HepG2 (cell line): ENCODE measurements at regions of chr2 and their contacts with region 1.

Region 1: GRCh38 chr2:120470041-120470965 is 124.4 kb downstream of the INHBB start:
- DNase-seq: peak; percentile 95
- ATAC-seq: peak; percentile 70
- H3K4me3 ChIP-seq: peak overlapping the region in 2 of 3 experiments; percentile 1 to 27; a peak in 2 of 6 replicates
- H3K27ac ChIP-seq: peak overlapping the region; percentile 36
- H3K4me1 ChIP-seq: peaks cover 87% of the 10 kb centered on the region
- H3K27me3 ChIP-seq: no peaks in the 10 kb centered on the region
- CTCF ChIP-seq: peak; percentile 26; the same call in 1 of the 2 replicates
- EP300 ChIP-seq: peak in 1 of 2 experiments; percentile 85; a peak in 3 of 4 replicates
- POLR2A ChIP-seq: peak in 1 of 2 experiments; percentile 60; a peak in 2 of 4 replicates
- RAD21 ChIP-seq: peak; percentile 34; the same call in 1 of the 2 replicates

Region 2: GRCh38 chr2:119223521-119224390 is 1246.5 kb before region 1 on chr2 and contains the start of gene STEAP3:
- CTCF ChIA-PET with region 1: no interaction called
- POLR2A ChIA-PET with region 1: no interaction called
- in situ Hi-C with region 1: no loop called
- intact Hi-C with region 1: no loop called
- DNase-seq: peak; percentile 74
- ATAC-seq: peak; percentile 93
- H3K4me3 ChIP-seq: peak within 1 kb of the TSS; percentile 71 to 87 (median 78)
- H3K27ac ChIP-seq: no peak within 1 kb of the TSS
- H3K4me1 ChIP-seq: peaks cover 54% of the 10 kb centered on the region
- H3K27me3 ChIP-seq: 0 out of 5 replicates have a peak, but pooled peaks cover 0 to 4% of the 10 kb centered on the region in 2 experiments
- CTCF ChIP-seq: 0 out of 2 replicates have a peak, but pooled peaks have one; percentile 10
- EP300 ChIP-seq: peak in 1 of 2 experiments; percentile 8; a peak in 1 of 4 replicates
- POLR2A ChIP-seq: peak; percentile 79 to 83
- RAD21 ChIP-seq: peak; percentile 26
- total RNA-seq, gene STEAP3: 12.8 and 21.1 TPM in 2 replicates

Region 3: GRCh38 chr2:120343433-120344105 is 126.7 kb before region 1 on chr2:
- CTCF ChIA-PET with region 1: no interaction called
- POLR2A ChIA-PET with region 1: interaction called, 17 read pairs
- in situ Hi-C with region 1: no loop called
- intact Hi-C with region 1: no loop called
- DNase-seq: peak; percentile 68
- ATAC-seq: peak; percentile 89
- H3K4me3 ChIP-seq: peak overlapping the region in 1 of 3 experiments; percentile 36; a peak in 1 of 6 replicates
- H3K27ac ChIP-seq: no peak overlapping the region
- H3K4me1 ChIP-seq: peaks cover 34% of the 10 kb centered on the region
- H3K27me3 ChIP-seq: peaks cover 25 to 88% of the 10 kb centered on the region in 2 experiments; a peak in 4 of 5 replicates
- CTCF ChIP-seq: peak; percentile 97
- EP300 ChIP-seq: no peak
- POLR2A ChIP-seq: no peak
- RAD21 ChIP-seq: peak; percentile 100

Region 4: GRCh38 chr2:120373424-120373823 is 96.9 kb before region 1 on chr2:
- CTCF ChIA-PET with region 1: no interaction called
- POLR2A ChIA-PET with region 1: no interaction called
- in situ Hi-C with region 1: no loop called
- intact Hi-C with region 1: no loop called
- DNase-seq: no peak
- ATAC-seq: no peak
- H3K4me3 ChIP-seq: no peak overlapping the region
- H3K27ac ChIP-seq: no peak overlapping the region
- H3K4me1 ChIP-seq: peaks cover 8% of the 10 kb centered on the region
- H3K27me3 ChIP-seq: peaks cover 10 to 70% of the 10 kb centered on the region in 2 experiments; a peak in 4 of 5 replicates
- CTCF ChIP-seq: no peak
- EP300 ChIP-seq: no peak
- POLR2A ChIP-seq: no peak
- RAD21 ChIP-seq: no peak

Region 5: DNA sequence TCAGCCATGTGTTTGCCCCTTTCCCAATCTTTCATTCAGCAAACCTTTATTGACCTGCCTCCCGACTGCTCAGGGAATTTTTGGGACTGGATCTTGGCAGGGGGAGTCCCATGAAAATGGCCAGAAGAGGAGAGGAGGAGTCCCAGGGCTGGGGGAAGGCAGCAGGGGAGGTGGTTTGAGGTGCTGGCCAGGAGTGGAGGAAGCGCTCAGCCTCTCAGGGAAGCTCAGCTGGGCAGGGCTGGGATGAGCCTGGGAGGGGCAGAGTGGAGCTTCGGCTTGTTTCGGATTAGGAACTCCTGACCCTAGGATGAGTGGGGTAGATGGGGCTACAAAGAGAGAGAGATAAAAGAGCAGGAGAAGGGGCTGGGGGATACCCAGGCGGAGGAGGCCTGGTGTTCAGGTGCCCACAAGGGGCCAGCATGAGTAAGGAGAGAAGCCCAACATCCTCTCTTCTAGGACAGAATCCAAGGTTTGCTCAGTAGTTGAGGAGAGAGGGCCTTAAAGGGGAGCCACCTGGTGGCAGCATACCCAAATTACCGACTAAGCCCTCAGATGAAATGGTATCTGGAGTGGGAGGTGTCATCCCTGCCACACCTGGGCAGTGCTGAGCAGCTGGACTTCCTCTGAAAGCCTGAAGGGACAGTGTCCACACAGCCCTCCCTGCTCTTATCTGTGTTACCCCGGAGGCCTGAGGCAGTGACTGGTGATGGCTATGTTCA is 33.3 kb before region 1 on chr2:
- CTCF ChIA-PET with region 1: no interaction called
- POLR2A ChIA-PET with region 1: interaction called, 22 read pairs
- in situ Hi-C with region 1: no loop called
- intact Hi-C with region 1: loop called (anchors 1 kb)
- DNase-seq: peak; percentile 80
- ATAC-seq: peak; percentile 80
- H3K4me3 ChIP-seq: no peak overlapping the region
- H3K27ac ChIP-seq: no peak overlapping the region
- H3K4me1 ChIP-seq: peaks cover 27% of the 10 kb centered on the region
- H3K27me3 ChIP-seq: peaks cover 23 to 80% of the 10 kb centered on the region in 2 experiments
- CTCF ChIP-seq: peak; percentile 82
- EP300 ChIP-seq: no peak
- POLR2A ChIP-seq: no peak
- RAD21 ChIP-seq: peak; percentile 95

Region 6: GRCh38 chr2:120481446-120482194 is 11.3 kb after region 1 on chr2:
- CTCF ChIA-PET with region 1: no interaction called
- POLR2A ChIA-PET with region 1: interaction called, 159 read pairs
- in situ Hi-C with region 1: no loop called
- intact Hi-C with region 1: loop called (anchors 1 kb)
- DNase-seq: peak; percentile 59
- ATAC-seq: peak; percentile 62
- H3K4me3 ChIP-seq: peak overlapping the region in 1 of 3 experiments; percentile 38; a peak in 1 of 6 replicates
- H3K27ac ChIP-seq: no peak overlapping the region
- H3K4me1 ChIP-seq: peaks cover 49% of the 10 kb centered on the region
- H3K27me3 ChIP-seq: no peaks in the 10 kb centered on the region
- CTCF ChIP-seq: peak; percentile 35; the same call in 1 of the 2 replicates
- EP300 ChIP-seq: peak in 1 of 2 experiments; percentile 58; a peak in 1 of 4 replicates
- POLR2A ChIP-seq: no peak
- RAD21 ChIP-seq: no peak

Region 7: DNA sequence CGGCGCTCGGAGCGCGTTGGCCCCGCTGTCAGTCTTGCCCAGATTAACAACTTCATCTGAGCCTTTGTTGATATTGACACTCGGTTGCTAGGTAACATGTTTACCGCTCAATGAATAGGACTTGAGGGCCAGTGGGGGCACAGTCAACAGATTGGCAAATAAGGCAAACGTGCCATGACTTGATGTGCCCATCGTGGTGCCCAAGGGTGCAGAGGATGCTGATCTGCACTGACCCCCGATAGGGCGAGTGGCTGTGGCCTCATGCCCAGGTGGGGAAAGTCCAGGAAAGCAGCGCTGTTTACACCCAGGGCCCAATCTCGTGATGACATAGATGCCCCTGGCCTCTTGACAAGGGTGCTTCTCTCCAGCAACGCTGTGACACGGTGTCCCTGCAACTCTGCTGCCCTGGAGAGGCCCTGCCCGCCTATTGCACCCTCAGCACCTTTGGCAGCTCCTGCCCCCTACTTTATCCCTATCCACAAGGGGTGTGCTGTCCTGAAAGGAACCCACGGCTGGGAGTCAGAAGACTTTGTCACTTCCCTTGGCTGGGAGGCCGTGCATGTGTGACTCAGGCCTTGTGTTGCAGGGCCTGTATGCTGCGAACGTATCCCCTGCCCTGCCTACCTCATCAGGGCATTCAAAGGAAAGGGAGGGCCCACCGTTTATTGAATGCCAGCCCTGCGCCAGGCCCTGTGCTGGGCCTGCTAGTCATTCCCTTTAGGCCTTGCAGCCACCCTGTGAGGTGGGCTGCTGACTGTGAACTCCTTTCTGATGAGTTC is 33.7 kb after region 1 on chr2:
- CTCF ChIA-PET with region 1: no interaction called
- POLR2A ChIA-PET with region 1: interaction called, 15 read pairs
- in situ Hi-C with region 1: no loop called
- intact Hi-C with region 1: no loop called
- DNase-seq: peak; percentile 59
- ATAC-seq: peak; percentile 72
- H3K4me3 ChIP-seq: 0 out of 6 replicates have a peak overlapping the region, but pooled peaks of 1 of the 3 experiments have one; percentile 10
- H3K27ac ChIP-seq: no peak overlapping the region
- H3K4me1 ChIP-seq: peaks cover 46% of the 10 kb centered on the region
- H3K27me3 ChIP-seq: peaks cover 2 to 70% of the 10 kb centered on the region in 2 experiments; a peak in 4 of 5 replicates
- CTCF ChIP-seq: peak; percentile 42
- EP300 ChIP-seq: no peak
- POLR2A ChIP-seq: no peak
- RAD21 ChIP-seq: peak; percentile 70; the same call in 1 of the 2 replicates

Region 8: DNA sequence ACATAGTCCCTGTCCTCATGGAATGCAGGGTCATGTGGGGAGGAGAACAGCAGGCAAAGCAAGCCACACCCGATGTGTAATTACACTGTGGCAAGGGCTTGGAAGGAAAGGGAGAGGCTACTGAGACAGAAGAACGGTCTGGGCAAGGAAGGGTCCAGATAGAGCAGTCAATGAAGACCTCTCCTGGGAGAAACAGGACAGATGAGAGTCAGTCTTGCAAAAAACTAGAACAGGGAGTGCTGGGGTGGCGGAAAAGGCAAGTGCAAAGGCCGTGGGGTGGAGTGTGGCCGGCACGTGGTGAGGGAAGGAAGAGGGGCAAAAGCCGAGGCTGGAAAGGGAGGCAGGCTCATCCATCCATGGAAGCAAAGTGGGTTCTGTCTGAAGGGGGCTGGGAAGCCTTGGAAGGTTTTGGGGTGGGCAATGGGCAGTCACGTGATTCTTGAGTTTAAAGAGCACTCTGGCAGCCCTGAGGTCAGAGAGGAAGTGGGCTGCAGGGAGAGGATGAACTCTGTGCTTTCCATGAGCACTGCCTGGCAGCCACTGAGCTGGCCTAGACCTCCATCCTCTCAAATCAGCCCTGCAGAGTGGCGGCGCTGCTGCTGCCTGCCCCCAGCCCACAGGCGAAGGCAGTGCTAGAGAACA is 57.9 kb after region 1 on chr2:
- CTCF ChIA-PET with region 1: no interaction called
- POLR2A ChIA-PET with region 1: interaction called, 13 read pairs
- in situ Hi-C with region 1: no loop called
- intact Hi-C with region 1: no loop called
- DNase-seq: no peak
- ATAC-seq: peak; percentile 48
- H3K4me3 ChIP-seq: no peak overlapping the region
- H3K27ac ChIP-seq: no peak overlapping the region
- H3K4me1 ChIP-seq: peaks cover 76% of the 10 kb centered on the region
- H3K27me3 ChIP-seq: peaks cover 0 to 6% of the 10 kb centered on the region in 2 experiments; a peak in 2 of 5 replicates
- CTCF ChIP-seq: peak; percentile 68
- EP300 ChIP-seq: no peak
- POLR2A ChIP-seq: 0 out of 4 replicates have a peak, but pooled peaks of 1 of the 2 experiments have one; percentile 47
- RAD21 ChIP-seq: no peak; the same call in 1 of the 2 replicates

Region 9: DNA sequence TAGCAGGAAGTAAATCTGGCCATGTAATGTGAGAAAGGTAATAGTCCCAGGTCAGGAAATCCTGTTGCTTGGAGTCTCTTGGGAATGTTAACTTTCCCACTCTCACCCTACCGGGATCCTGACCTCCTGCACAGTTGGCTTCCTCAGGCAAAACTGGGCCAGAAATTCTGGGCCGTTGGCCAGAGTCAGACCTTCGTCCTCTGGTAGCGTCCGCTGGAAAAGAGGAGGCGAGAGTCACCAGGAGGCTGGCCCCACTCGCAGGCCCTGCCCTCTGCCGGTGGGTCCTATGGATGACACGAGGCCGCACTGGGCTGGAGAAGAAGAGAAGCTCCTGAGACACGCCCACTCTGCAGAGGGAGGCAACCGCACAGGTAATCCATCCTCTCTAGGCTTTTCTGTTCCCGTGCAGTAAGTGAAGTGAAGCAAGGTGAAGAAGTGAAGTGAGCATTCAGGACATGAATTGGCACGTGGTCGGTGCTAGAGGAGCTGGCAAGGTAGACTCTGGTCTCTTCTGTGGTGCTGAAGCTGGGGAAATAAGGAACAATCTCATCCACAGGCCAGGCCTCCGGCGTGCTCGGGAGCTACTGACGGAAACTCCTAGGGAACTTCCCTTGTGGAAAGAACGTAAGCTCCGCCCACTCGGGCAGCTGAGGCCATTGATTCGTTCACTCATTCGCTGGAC is 82.6 kb after region 1 on chr2:
- CTCF ChIA-PET with region 1: interaction called, 3 read pairs
- POLR2A ChIA-PET with region 1: interaction called, 105 read pairs
- in situ Hi-C with region 1: no loop called
- intact Hi-C with region 1: loop called (anchors 1 kb)
- DNase-seq: peak; percentile 90
- ATAC-seq: peak; percentile 91
- H3K4me3 ChIP-seq: peak overlapping the region in 1 of 3 experiments; percentile 20; a peak in 3 of 6 replicates
- H3K27ac ChIP-seq: peak overlapping the region; percentile 44
- H3K4me1 ChIP-seq: peaks cover 92% of the 10 kb centered on the region
- H3K27me3 ChIP-seq: peaks cover 6 to 19% of the 10 kb centered on the region in 2 experiments; a peak in 4 of 5 replicates
- CTCF ChIP-seq: peak; percentile 99
- EP300 ChIP-seq: peak; percentile 20 to 36; a peak in 2 of 4 replicates
- POLR2A ChIP-seq: peak in 1 of 2 experiments; percentile 50; a peak in 1 of 4 replicates
- RAD21 ChIP-seq: peak; percentile 99